Endothelial cell of umbilical vein (primary cell): ENCODE measurements at regions of chr12 and their contacts with region 1.

Region 1: DNA sequence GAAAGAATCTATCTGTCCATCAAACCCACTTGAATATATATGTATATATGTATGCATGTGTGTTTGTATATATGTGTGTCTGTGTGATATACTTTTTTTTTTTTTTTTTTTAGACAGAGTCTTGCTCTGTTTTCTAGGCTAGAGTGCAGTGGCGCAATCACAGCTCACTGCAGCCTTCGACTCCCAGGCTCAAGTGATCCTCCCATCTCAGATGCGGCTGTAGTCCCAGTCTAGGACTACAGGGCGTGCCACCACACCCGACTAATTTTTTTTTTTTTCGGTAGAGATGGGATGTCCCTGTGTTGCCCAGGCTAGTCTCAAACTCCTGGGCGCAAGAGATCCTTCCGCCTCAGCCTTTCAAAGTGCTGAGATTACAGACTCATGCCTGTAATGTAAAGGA is 13.0 kb upstream of the APOBEC1 start:
- DNase-seq: peak; percentile 23
- H3K4me3 ChIP-seq: no peak overlapping the region
- H3K27ac ChIP-seq: no peak overlapping the region
- H3K4me1 ChIP-seq: peaks cover 3% of the 10 kb centered on the region
- H3K27me3 ChIP-seq: peaks cover 0 to 6% of the 10 kb centered on the region in 2 experiments
- CTCF ChIP-seq: no peak
- POLR2A ChIP-seq: no peak

Region 2: GRCh38 chr12:7695237-7696197 is 16.8 kb after region 1 on chr12 and contains the start of gene GDF3:
- CTCF ChIA-PET with region 1: interaction called, 9 read pairs
- POLR2A ChIA-PET with region 1: interaction called, 4 read pairs
- dilution Hi-C with region 1: no loop called
- intact Hi-C with region 1: loop called (anchors 1 kb)
- DNase-seq: peak; percentile 94
- H3K4me3 ChIP-seq: peak within 1 kb of the TSS in 1 of 3 experiments; percentile 21
- H3K27ac ChIP-seq: peak within 1 kb of the TSS; percentile 82
- H3K4me1 ChIP-seq: peaks cover 16% of the 10 kb centered on the region
- H3K27me3 ChIP-seq: no peaks in the 10 kb centered on the region
- CTCF ChIP-seq: no peak
- POLR2A ChIP-seq: peak; percentile 48
- total RNA-seq, gene GDF3: 4.1 and 5.0 TPM in 2 replicates